Calu3 (cell line): ENCODE measurements at regions of chr12 and their contacts with region 1.

Region 1: GRCh38 chr12:71392521-71393145 is 47.0 kb upstream of the LGR5 start:
- DNase-seq: peak; percentile 37
- H3K4me3 Mint-ChIP-seq: no peak overlapping the region
- H3K27ac Mint-ChIP-seq: no peak overlapping the region
- H3K4me1 Mint-ChIP-seq: peaks cover 8% of the 10 kb centered on the region
- H3K27me3 Mint-ChIP-seq: no peaks in the 10 kb centered on the region
- CTCF ChIP-seq: peak; percentile 80

Region 2: DNA sequence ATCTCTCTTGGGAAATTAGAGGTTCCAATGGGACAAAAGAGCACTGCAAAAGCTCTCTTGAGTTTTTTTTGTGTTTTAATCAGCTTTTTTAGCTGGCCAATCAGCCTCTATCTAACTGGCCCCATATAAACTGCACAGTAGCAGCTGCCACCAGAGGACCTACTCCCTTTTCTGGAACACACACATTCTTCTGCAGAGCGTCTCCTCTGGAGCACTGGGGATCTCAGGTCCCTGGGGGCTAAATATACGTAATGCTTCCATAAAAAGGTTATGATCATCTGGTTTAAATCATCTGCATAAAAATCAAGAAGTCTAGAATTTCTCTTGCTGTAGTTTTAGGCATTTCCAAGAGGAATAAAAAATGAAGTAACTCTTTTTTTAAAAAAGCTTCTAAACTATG is 267.1 kb before region 1 on chr12:
- CTCF ChIA-PET with region 1: no interaction called
- intact Hi-C with region 1: loop called (anchors 1 kb)
- DNase-seq: no peak
- H3K4me3 Mint-ChIP-seq: no peak overlapping the region
- H3K27ac Mint-ChIP-seq: no peak overlapping the region
- H3K4me1 Mint-ChIP-seq: peaks cover 10% of the 10 kb centered on the region
- H3K27me3 Mint-ChIP-seq: no peaks in the 10 kb centered on the region
- CTCF ChIP-seq: no peak

Region 3: DNA sequence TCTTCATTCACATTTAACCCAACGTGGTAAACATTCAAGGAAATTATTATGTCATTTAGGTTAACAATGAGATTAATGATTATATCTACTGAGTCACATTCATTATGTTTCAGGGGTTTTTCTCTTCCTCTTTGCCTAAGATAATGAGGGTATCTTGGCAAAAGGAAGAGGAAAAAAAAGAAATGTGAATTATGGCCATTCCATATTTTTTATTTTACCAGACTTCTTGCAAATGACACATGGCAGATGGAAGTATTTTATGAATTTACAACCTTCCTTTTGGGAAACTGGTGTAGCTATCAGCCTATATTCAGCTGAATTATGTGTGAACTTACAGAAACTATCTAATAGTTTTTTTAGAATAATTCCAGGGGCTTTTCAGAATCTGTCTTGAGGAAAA is 262.0 kb before region 1 on chr12:
- CTCF ChIA-PET with region 1: no interaction called
- intact Hi-C with region 1: loop called (anchors 1 kb)
- DNase-seq: no peak
- H3K4me3 Mint-ChIP-seq: no peak overlapping the region
- H3K27ac Mint-ChIP-seq: peak overlapping the region; percentile 42
- H3K4me1 Mint-ChIP-seq: peaks cover 44% of the 10 kb centered on the region
- H3K27me3 Mint-ChIP-seq: no peaks in the 10 kb centered on the region
- CTCF ChIP-seq: no peak